CD8-positive, alpha-beta T cell (primary cell): ENCODE measurements at regions of chr9 and their contacts with region 1.

Region 1: DNA sequence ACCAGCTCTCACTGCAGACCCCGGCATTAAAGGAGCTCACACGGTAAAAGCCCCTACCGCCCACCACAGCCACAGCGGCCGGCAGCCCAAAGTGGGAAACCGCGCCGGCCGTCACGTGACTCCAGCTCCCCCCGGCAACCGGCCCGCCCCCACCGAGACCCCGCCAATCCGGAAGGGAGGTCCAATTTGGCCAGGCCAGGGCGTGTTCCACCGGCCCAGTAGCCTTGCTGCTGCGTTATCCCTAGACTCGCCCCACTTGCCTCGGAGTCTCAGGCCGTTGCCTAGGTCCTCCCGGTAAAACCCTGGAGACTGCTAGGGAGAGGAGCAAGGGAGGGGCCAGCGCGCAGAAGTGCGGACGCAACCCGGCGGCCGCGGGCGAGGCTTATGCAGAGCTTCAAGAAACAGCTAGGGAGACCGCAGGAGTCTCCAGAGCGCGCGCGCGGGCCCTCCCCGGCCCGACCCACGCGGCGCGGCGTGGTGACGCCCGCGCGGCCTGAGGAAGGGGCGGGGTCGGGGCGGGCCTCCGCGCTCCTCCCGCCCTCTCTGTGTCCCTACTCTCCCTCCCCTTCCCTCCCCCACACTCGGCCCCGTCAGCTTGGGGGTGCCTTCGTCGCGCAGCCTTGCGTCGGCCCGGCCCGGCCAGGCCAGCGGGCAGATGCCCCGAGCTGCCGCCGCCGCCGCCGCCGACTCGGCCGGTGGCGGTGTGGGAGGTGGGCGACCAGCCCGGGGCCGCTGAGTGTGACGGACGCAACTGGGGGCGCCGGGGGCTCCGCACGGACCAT is at the start of gene RIC1:
- DNase-seq: peak; percentile 74 to 96 (median 87)
- ATAC-seq: peak; percentile 81
- H3K4me3 ChIP-seq: peak within 1 kb of the TSS; percentile 73 to 95
- H3K4me3 Mint-ChIP-seq: peak within 1 kb of the TSS; percentile 98
- H3K27ac ChIP-seq: peak within 1 kb of the TSS; percentile 84 to 88
- H3K27ac Mint-ChIP-seq: peak within 1 kb of the TSS; percentile 99
- H3K4me1 ChIP-seq: peaks cover 53% of the 10 kb centered on the region
- H3K4me1 Mint-ChIP-seq: peaks cover 63% of the 10 kb centered on the region
- H3K27me3 ChIP-seq: no peaks in the 10 kb centered on the region
- H3K27me3 Mint-ChIP-seq: no peaks in the 10 kb centered on the region
- CTCF ChIP-seq: no peak
- total RNA-seq, gene RIC1: 17.0 to 17.4 TPM

Region 2: GRCh38 chr9:5336688-5337087 is 292.0 kb before region 1 on chr9:
- CTCF ChIA-PET with region 1: no interaction called
- POLR2A ChIA-PET with region 1: no interaction called
- intact Hi-C with region 1: loop called in 1 of 2 experiments (anchors 10 kb)
- DNase-seq: peak in 5 of 9 experiments; percentile 23 to 69 (median 47)
- ATAC-seq: peak; percentile 19
- H3K4me3 ChIP-seq: peak overlapping the region; percentile 2 to 31
- H3K4me3 Mint-ChIP-seq: peak overlapping the region; percentile 71
- H3K27ac ChIP-seq: peak overlapping the region; percentile 28 to 30
- H3K27ac Mint-ChIP-seq: peak overlapping the region; percentile 89
- H3K4me1 ChIP-seq: peaks cover 27% of the 10 kb centered on the region
- H3K4me1 Mint-ChIP-seq: peaks cover 54% of the 10 kb centered on the region
- H3K27me3 ChIP-seq: no peaks in the 10 kb centered on the region
- H3K27me3 Mint-ChIP-seq: no peaks in the 10 kb centered on the region
- CTCF ChIP-seq: no peak

Region 3: DNA sequence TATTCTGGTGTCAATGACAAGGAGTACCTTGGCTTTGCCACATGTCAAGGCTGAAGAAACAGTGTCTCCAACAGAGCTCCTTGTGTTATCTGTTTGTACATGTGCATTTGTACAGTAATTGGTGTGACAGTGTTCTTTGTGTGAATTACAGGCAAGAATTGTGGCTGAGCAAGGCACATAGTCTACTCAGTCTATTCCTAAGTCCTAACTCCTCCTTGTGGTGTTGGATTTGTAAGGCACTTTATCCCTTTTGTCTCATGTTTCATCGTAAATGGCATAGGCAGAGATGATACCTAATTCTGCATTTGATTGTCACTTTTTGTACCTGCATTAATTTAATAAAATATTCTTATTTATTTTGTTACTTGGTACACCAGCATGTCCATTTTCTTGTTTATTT is 158.6 kb before region 1 on chr9:
- CTCF ChIA-PET with region 1: no interaction called
- POLR2A ChIA-PET with region 1: no interaction called
- intact Hi-C with region 1: no loop called
- DNase-seq: no peak
- ATAC-seq: no peak
- H3K4me3 ChIP-seq: no peak overlapping the region
- H3K4me3 Mint-ChIP-seq: no peak overlapping the region
- H3K27ac ChIP-seq: no peak overlapping the region
- H3K27ac Mint-ChIP-seq: no peak overlapping the region
- H3K4me1 ChIP-seq: no peaks in the 10 kb centered on the region
- H3K4me1 Mint-ChIP-seq: no peaks in the 10 kb centered on the region
- H3K27me3 ChIP-seq: no peaks in the 10 kb centered on the region
- H3K27me3 Mint-ChIP-seq: no peaks in the 10 kb centered on the region
- CTCF ChIP-seq: no peak

Region 4: DNA sequence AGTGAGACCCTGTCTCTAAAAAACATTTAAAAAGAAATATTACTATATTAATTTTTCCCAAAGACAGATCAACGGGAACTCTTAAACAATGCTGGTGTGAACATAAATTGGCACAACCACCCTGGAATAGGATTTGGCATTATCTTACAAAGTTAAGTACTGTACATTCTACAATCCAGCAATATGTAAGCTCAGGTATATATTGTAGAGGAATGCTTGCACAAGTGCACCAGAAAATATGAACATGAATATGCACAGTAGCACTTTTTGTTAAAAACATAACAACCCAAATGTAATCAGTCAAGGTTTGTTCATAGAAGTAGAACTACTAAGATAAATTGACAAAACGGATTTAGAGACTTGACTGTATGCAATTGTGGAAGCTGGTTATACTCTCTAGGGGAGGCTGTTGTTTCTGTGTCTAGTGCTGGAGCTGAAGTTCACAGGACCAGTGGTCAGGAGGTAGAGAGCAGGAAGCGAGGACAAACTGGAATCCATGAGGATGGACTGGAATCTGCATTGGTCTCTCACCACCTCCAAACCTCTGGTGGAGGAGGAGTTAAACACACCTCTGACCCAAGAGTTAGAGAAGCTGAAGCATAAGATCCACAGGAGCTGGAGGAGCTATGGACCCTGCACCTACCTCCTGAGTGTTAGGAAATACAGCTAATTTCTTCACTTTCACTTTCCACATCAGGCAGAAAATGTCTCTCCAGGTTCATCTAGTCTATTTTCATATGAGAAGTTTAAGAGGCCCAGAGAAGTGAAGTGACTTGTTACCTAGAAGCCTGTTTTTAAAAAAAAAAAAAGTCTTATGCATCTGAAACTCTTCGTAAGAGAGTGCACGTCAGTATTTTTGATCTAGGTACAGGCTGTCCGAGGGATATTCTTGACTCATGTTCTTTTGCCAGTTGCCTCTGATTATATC is 20.2 kb before region 1 on chr9:
- CTCF ChIA-PET with region 1: interaction called, 5 read pairs
- POLR2A ChIA-PET with region 1: interaction called, 9 read pairs
- intact Hi-C with region 1: loop called in 1 of 2 experiments (anchors 2 kb)
- DNase-seq: peak in 1 of 9 experiments; percentile 25
- ATAC-seq: peak; percentile 63
- H3K4me3 ChIP-seq: peak overlapping the region; percentile 17 to 20
- H3K4me3 Mint-ChIP-seq: peak overlapping the region; percentile 82
- H3K27ac ChIP-seq: no peak overlapping the region
- H3K27ac Mint-ChIP-seq: peak overlapping the region; percentile 83
- H3K4me1 ChIP-seq: peaks cover 6% of the 10 kb centered on the region
- H3K4me1 Mint-ChIP-seq: peaks cover 36% of the 10 kb centered on the region
- H3K27me3 ChIP-seq: no peaks in the 10 kb centered on the region
- H3K27me3 Mint-ChIP-seq: no peaks in the 10 kb centered on the region
- CTCF ChIP-seq: no peak

Region 5: DNA sequence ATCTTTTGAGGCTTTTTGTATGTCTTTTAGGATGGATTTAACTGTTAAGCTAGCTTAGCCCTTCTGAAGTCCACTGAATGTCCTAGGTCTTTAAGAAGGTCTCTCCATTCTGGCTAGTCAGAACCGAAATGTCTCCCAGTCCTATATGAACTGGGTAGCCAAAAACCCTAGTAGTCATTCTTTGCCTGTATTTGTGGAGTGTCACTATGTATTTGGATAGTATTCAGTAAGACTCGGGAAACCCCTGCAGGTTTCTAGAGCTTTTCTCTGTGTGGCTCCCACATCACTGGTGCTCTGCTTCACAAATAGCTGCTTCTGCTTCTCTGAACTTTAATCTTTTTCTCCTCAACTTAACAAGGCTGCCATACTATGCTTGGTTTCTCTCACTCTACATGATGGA is 68.2 kb after region 1 on chr9:
- CTCF ChIA-PET with region 1: no interaction called
- POLR2A ChIA-PET with region 1: no interaction called
- intact Hi-C with region 1: no loop called
- DNase-seq: no peak
- ATAC-seq: no peak
- H3K4me3 ChIP-seq: no peak overlapping the region
- H3K4me3 Mint-ChIP-seq: no peak overlapping the region
- H3K27ac ChIP-seq: no peak overlapping the region
- H3K27ac Mint-ChIP-seq: no peak overlapping the region
- H3K4me1 ChIP-seq: no peaks in the 10 kb centered on the region
- H3K4me1 Mint-ChIP-seq: peaks cover 19% of the 10 kb centered on the region
- H3K27me3 ChIP-seq: no peaks in the 10 kb centered on the region
- H3K27me3 Mint-ChIP-seq: no peaks in the 10 kb centered on the region
- CTCF ChIP-seq: no peak

Region 6: DNA sequence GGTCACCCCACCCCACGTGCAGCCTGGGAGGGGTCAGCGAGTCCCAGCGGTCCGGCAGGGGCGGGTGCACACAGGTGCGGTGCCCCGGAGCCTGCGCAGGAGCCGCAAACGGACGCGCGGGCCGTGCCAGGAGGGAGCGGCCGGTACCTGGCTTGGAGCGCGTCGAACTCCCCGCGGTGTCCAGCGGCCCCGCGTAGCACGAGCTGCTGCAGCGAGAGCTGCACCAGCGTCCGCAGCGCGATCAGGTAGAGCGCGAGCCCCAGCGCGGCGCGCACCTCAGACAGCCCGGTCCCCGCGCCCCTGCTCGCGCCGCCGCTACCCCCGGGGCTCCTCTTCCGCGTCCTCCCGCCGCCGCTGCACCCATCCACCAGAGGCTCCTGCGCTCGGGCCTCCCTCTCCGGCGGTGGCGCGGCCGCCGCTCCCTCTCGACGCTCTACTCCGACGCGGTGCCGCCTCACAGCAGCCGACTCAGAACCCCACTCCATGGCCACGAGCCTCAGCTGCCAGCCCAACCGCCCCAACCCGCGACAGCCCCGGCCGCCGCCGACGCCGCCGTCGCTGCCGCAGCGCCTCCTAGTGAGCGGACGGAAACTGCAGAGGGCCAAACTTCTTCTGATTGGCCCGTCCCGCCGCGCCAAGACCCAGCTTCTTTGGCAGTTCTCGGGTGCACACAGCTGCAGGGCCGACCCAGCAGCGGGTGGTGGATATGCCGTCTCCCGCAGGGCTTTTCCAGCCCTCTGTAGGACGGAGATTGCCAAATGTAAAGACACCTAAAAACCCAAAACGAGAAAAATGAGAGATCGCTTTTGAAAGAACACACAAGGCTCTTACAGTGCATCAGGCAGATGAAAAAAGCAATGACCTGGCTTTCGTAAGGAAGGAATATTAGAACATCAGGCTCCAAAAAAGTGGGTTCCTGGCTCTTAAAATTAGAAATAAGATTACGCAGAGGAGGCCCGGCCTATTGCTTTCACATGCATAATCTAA is 204.1 kb after region 1 on chr9 and contains the start of gene ERMP1:
- CTCF ChIA-PET with region 1: interaction called, 3 read pairs
- POLR2A ChIA-PET with region 1: no interaction called
- intact Hi-C with region 1: loop called in 1 of 2 experiments (anchors 5 kb)
- DNase-seq: peak; percentile 85 to 95 (median 92)
- ATAC-seq: peak; percentile 87
- H3K4me3 ChIP-seq: peak within 1 kb of the TSS; percentile 57 to 91
- H3K4me3 Mint-ChIP-seq: peak within 1 kb of the TSS; percentile 96
- H3K27ac ChIP-seq: peak within 1 kb of the TSS in 1 of 2 experiments; percentile 41
- H3K27ac Mint-ChIP-seq: peak within 1 kb of the TSS; percentile 88
- H3K4me1 ChIP-seq: peaks cover 34% of the 10 kb centered on the region
- H3K4me1 Mint-ChIP-seq: peaks cover 66% of the 10 kb centered on the region
- H3K27me3 ChIP-seq: no peaks in the 10 kb centered on the region
- H3K27me3 Mint-ChIP-seq: no peaks in the 10 kb centered on the region
- CTCF ChIP-seq: peak; percentile 83
- total RNA-seq, gene ERMP1: 5.2 to 7.9 TPM

Region 7: GRCh38 chr9:6068983-6069382 is 440.3 kb after region 1 on chr9:
- CTCF ChIA-PET with region 1: no interaction called
- POLR2A ChIA-PET with region 1: no interaction called
- intact Hi-C with region 1: loop called in 1 of 2 experiments (anchors 5 kb)
- DNase-seq: peak in 3 of 9 experiments; percentile 30 to 86 (median 69)
- ATAC-seq: peak; percentile 96
- H3K4me3 ChIP-seq: peak overlapping the region in 1 of 2 experiments; percentile 9
- H3K4me3 Mint-ChIP-seq: peak overlapping the region; percentile 71
- H3K27ac ChIP-seq: peak overlapping the region; percentile 25 to 74
- H3K27ac Mint-ChIP-seq: peak overlapping the region; percentile 86
- H3K4me1 ChIP-seq: peaks cover 16% of the 10 kb centered on the region
- H3K4me1 Mint-ChIP-seq: peaks cover 18% of the 10 kb centered on the region
- H3K27me3 ChIP-seq: no peaks in the 10 kb centered on the region
- H3K27me3 Mint-ChIP-seq: no peaks in the 10 kb centered on the region
- CTCF ChIP-seq: no peak

Region 8: GRCh38 chr9:6757456-6758247 is 1128.9 kb after region 1 on chr9 and contains the start of gene KDM4C:
- CTCF ChIA-PET with region 1: no interaction called
- POLR2A ChIA-PET with region 1: no interaction called
- intact Hi-C with region 1: loop called in 1 of 2 experiments (anchors 2 kb)
- DNase-seq: peak; percentile 88 to 98 (median 94)
- ATAC-seq: peak; percentile 74
- H3K4me3 ChIP-seq: peak within 1 kb of the TSS; percentile 79 to 80
- H3K4me3 Mint-ChIP-seq: peak within 1 kb of the TSS; percentile 96
- H3K27ac ChIP-seq: peak within 1 kb of the TSS; percentile 97
- H3K27ac Mint-ChIP-seq: peak within 1 kb of the TSS; percentile 100
- H3K4me1 ChIP-seq: peaks cover 15% of the 10 kb centered on the region
- H3K4me1 Mint-ChIP-seq: peaks cover 39% of the 10 kb centered on the region
- H3K27me3 ChIP-seq: no peaks in the 10 kb centered on the region
- H3K27me3 Mint-ChIP-seq: no peaks in the 10 kb centered on the region
- CTCF ChIP-seq: no peak
- total RNA-seq, gene KDM4C: 51.6 to 54.6 TPM